Gastrocnemius medialis (tissue), 4 donors: ENCODE measurements at regions of chr2 and their contacts with region 1.

Region 1: GRCh38 chr2:97697252-97698235 is 15.8 kb upstream of the ZAP70 start:
- DNase-seq: peak; percentile 66 to 81
- ATAC-seq: peak; percentile 94
- H3K4me3 ChIP-seq: no peak overlapping the region
- H3K27ac ChIP-seq: no peak overlapping the region
- H3K4me1 ChIP-seq: no peaks in the 10 kb centered on the region
- H3K27me3 ChIP-seq: no peaks in the 10 kb centered on the region
- CTCF ChIP-seq: peak; percentile 92 to 97 (median 94)
- POLR2A ChIP-seq: no peak

Region 2: GRCh38 chr2:96065381-96065930 is 1632.1 kb before region 1 on chr2:
- in situ Hi-C with region 1: loop called in 1 of 4 experiments (anchors 25 kb)
- intact Hi-C with region 1: no loop called
- DNase-seq: no peak
- ATAC-seq: no peak
- H3K4me3 ChIP-seq: no peak overlapping the region
- H3K27ac ChIP-seq: no peak overlapping the region
- H3K4me1 ChIP-seq: no peaks in the 10 kb centered on the region
- H3K27me3 ChIP-seq: no peaks in the 10 kb centered on the region
- CTCF ChIP-seq: no peak
- POLR2A ChIP-seq: no peak

Region 3: GRCh38 chr2:97645695-97646629 is 51.6 kb before region 1 on chr2 and contains the start of gene COX5B:
- in situ Hi-C with region 1: no loop called
- intact Hi-C with region 1: loop called (anchors 2 kb)
- DNase-seq: peak; percentile 98
- ATAC-seq: peak; percentile 98
- H3K4me3 ChIP-seq: peak within 1 kb of the TSS; percentile 85 to 97 (median 94)
- H3K27ac ChIP-seq: peak within 1 kb of the TSS; percentile 90 to 98 (median 98)
- H3K4me1 ChIP-seq: peaks cover 15% of the 10 kb centered on the region in 2 donors
- H3K27me3 ChIP-seq: no peaks in the 10 kb centered on the region
- CTCF ChIP-seq: peak in 1 of 5 experiments; percentile 23
- POLR2A ChIP-seq: peak; percentile 78 to 84
- total RNA-seq, gene COX5B: 742 to 1,417 (median 1,247) TPM

Region 4: DNA sequence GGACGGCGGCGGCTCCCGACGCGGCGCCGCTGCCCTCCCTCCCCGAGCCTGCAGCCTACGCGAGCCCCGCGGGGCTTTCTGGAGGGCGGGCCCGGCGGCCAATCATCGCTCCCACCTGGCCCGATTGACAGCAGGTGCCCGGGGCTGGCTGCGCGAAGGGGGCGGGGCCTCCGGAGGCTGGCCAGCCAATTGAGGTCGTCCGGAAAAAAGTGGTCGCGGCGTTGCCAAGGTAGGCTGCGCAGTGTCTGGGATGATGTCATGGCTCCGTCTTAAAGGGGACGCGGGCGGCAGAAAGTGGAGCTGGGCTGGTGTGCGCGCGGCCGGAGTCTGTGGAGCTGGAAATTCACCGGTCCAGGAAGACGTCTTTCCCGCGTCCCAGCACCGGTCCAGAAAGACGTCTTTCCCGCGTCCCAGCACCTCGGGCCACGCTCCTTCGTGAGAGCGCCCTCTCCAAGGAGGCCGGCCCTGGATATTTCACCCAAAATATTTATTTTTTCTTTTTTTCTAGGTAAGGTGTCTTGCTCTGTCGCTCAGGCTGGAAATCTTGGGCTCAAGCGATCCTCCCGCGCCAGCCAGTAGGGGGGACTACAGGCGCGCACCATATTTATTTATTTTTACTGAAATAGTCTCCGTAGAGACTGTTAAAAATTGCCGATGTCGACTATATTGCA is 33.4 kb before region 1 on chr2 and contains the start of gene ACTR1B:
- in situ Hi-C with region 1: no loop called
- intact Hi-C with region 1: loop called (anchors 1 kb)
- DNase-seq: peak; percentile 97 to 98
- ATAC-seq: peak; percentile 95 to 96
- H3K4me3 ChIP-seq: peak within 1 kb of the TSS; percentile 59 to 94 (median 82)
- H3K27ac ChIP-seq: peak within 1 kb of the TSS; percentile 86 to 98 (median 92)
- H3K4me1 ChIP-seq: peaks cover 23 to 29% of the 10 kb centered on the region in 2 donors
- H3K27me3 ChIP-seq: no peaks in the 10 kb centered on the region
- CTCF ChIP-seq: peak; percentile 55 to 73 (median 67)
- POLR2A ChIP-seq: peak; percentile 75 to 93
- total RNA-seq, gene ACTR1B: 53.5 to 76.1 (median 56.5) TPM

Region 5: GRCh38 chr2:97858442-97858841 is 160.9 kb after region 1 on chr2:
- in situ Hi-C with region 1: no loop called
- intact Hi-C with region 1: no loop called
- DNase-seq: no peak
- ATAC-seq: peak in 1 of 2 donors; percentile 29
- H3K4me3 ChIP-seq: no peak overlapping the region
- H3K27ac ChIP-seq: peak overlapping the region; percentile 48 to 64 (median 58)
- H3K4me1 ChIP-seq: peaks cover 13 to 14% of the 10 kb centered on the region in 2 donors
- H3K27me3 ChIP-seq: no peaks in the 10 kb centered on the region
- CTCF ChIP-seq: no peak
- POLR2A ChIP-seq: no peak

Region 6: DNA sequence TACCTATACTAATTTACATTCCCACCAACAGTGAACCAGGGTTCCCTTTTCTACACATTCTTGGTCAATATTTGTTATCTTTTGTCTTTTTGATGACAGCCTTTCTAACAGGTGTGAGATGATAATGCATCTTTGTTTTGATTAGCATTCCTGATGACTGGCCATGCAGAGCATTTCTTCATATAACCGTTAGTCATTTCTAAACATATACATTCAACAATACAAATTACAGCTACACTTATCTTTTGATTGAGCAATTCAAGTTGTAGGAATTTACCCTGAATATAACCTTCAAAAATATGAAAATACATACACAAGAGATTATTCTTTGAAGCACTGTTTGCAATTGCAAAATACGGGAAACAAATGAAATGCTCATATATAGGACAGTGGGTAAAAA is 203.3 kb after region 1 on chr2:
- in situ Hi-C with region 1: no loop called
- intact Hi-C with region 1: no loop called
- DNase-seq: no peak
- ATAC-seq: no peak
- H3K4me3 ChIP-seq: no peak overlapping the region
- H3K27ac ChIP-seq: no peak overlapping the region
- H3K4me1 ChIP-seq: peaks cover 0 to 3% of the 10 kb centered on the region in 2 donors
- H3K27me3 ChIP-seq: no peaks in the 10 kb centered on the region
- CTCF ChIP-seq: no peak
- POLR2A ChIP-seq: no peak